B cell (primary cell): ENCODE measurements at regions of chr3 and their contacts with region 1.

Region 1: GRCh38 chr3:104596551-104596950 is 770.2 kb upstream of the ALCAM start:
- DNase-seq: peak; percentile 59
- ATAC-seq: peak; percentile 63
- H3K4me3 ChIP-seq: no peak overlapping the region
- H3K4me3 Mint-ChIP-seq: no peak overlapping the region
- H3K27ac ChIP-seq: no peak overlapping the region
- H3K27ac Mint-ChIP-seq: no peak overlapping the region
- H3K4me1 ChIP-seq: no peaks in the 10 kb centered on the region
- H3K4me1 Mint-ChIP-seq: peaks cover 3% of the 10 kb centered on the region
- H3K27me3 ChIP-seq: no peaks in the 10 kb centered on the region
- H3K27me3 Mint-ChIP-seq: no peaks in the 10 kb centered on the region
- CTCF ChIP-seq: peak; percentile 69

Region 2: GRCh38 chr3:104273046-104273649 is 323.4 kb before region 1 on chr3:
- CTCF ChIA-PET with region 1: interaction called, 9 read pairs
- POLR2A ChIA-PET with region 1: no interaction called
- intact Hi-C with region 1: loop called (anchors 5 kb)
- DNase-seq: peak; percentile 50
- ATAC-seq: no peak
- H3K4me3 ChIP-seq: no peak overlapping the region
- H3K4me3 Mint-ChIP-seq: no peak overlapping the region
- H3K27ac ChIP-seq: no peak overlapping the region
- H3K27ac Mint-ChIP-seq: no peak overlapping the region
- H3K4me1 ChIP-seq: no peaks in the 10 kb centered on the region
- H3K4me1 Mint-ChIP-seq: no peaks in the 10 kb centered on the region
- H3K27me3 ChIP-seq: no peaks in the 10 kb centered on the region
- H3K27me3 Mint-ChIP-seq: no peaks in the 10 kb centered on the region
- CTCF ChIP-seq: peak; percentile 81

Region 3: GRCh38 chr3:104606812-104607211 is 10.3 kb after region 1 on chr3:
- CTCF ChIA-PET with region 1: interaction called, 15 read pairs
- POLR2A ChIA-PET with region 1: no interaction called
- intact Hi-C with region 1: no loop called
- DNase-seq: no peak
- ATAC-seq: no peak
- H3K4me3 ChIP-seq: no peak overlapping the region
- H3K4me3 Mint-ChIP-seq: no peak overlapping the region
- H3K27ac ChIP-seq: no peak overlapping the region
- H3K27ac Mint-ChIP-seq: no peak overlapping the region
- H3K4me1 ChIP-seq: no peaks in the 10 kb centered on the region
- H3K4me1 Mint-ChIP-seq: peaks cover 4% of the 10 kb centered on the region
- H3K27me3 ChIP-seq: no peaks in the 10 kb centered on the region
- H3K27me3 Mint-ChIP-seq: no peaks in the 10 kb centered on the region
- CTCF ChIP-seq: no peak